Activated naive CD4-positive, alpha-beta T cell treated with anti-CD3 and anti-CD28 coated beads for 36 hours (primary cell): ENCODE measurements at regions of chr2 and their contacts with region 1.

Region 1: DNA sequence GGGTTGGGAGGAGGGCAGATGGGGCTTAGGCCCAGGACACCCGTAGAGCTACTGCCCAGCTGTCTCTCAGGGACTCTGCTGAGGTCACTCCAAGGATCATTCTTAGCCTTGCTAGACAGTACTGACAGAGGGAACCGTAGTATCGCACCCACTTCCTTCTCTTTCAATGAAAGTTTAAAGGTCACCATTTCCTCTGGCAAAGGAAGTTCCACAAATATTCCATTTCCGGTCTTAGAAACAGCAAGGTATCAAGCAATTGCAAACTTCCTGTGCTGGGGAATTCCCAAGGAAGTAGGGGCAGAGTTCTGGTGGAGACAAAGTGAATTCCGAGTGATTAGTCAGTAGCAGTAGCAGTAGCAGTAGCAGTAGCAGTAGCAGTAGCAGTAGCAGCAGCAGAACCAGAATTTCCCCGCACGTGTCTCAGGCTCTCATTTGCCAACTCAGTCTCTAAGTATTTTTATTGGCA is 24.7 kb downstream of the IL1B start:
- DNase-seq: peak; percentile 49
- H3K4me3 Mint-ChIP-seq: no peak overlapping the region
- H3K27ac Mint-ChIP-seq: peak overlapping the region; percentile 64
- H3K4me1 Mint-ChIP-seq: peaks cover 25% of the 10 kb centered on the region
- H3K27me3 Mint-ChIP-seq: no peaks in the 10 kb centered on the region

Region 2: DNA sequence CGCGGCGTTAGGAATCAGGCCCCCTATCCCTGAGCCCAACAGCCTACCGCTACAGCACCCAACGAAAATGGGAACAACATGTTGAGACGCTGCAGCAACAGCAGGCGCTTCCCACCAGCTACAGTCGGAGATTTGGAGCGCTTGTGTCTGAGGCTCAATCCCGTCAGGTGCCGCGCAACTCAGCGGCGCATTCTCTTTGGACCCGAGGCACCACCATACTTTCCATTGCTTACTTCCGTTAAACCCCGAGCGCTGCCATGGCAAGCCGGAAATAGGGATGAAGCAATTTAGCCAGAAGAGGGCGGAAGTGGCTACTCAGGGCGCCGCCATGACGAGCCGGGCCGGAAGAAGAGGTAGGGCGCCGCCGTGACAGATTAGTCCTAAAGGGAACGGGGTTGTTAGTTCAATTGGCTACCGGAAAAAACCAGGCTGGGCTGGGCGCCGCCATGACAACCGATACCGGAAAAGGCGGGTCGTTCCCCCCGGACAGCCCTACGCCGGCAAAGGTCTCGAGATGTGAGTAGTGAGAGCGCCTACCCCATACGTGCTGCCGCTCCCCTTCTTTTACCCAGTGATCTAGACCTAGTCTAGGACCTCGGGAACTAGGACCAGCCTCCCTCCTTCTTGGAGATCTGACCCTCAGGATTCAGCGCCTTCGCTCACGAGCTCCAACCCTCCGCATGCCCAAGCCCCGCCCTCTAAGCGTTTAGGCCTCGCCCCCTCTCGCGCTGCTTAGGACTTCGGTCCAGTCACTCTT is 227.6 kb before region 1 on chr2 and contains the start of gene CHCHD5:
- CTCF ChIA-PET with region 1: no interaction called
- intact Hi-C with region 1: no loop called
- DNase-seq: peak; percentile 96
- H3K4me3 Mint-ChIP-seq: peak within 1 kb of the TSS; percentile 98
- H3K27ac Mint-ChIP-seq: peak within 1 kb of the TSS; percentile 96
- H3K4me1 Mint-ChIP-seq: peaks cover 26% of the 10 kb centered on the region
- H3K27me3 Mint-ChIP-seq: no peaks in the 10 kb centered on the region
- total RNA-seq, gene CHCHD5: 40.3 to 43.5 TPM

Region 3: DNA sequence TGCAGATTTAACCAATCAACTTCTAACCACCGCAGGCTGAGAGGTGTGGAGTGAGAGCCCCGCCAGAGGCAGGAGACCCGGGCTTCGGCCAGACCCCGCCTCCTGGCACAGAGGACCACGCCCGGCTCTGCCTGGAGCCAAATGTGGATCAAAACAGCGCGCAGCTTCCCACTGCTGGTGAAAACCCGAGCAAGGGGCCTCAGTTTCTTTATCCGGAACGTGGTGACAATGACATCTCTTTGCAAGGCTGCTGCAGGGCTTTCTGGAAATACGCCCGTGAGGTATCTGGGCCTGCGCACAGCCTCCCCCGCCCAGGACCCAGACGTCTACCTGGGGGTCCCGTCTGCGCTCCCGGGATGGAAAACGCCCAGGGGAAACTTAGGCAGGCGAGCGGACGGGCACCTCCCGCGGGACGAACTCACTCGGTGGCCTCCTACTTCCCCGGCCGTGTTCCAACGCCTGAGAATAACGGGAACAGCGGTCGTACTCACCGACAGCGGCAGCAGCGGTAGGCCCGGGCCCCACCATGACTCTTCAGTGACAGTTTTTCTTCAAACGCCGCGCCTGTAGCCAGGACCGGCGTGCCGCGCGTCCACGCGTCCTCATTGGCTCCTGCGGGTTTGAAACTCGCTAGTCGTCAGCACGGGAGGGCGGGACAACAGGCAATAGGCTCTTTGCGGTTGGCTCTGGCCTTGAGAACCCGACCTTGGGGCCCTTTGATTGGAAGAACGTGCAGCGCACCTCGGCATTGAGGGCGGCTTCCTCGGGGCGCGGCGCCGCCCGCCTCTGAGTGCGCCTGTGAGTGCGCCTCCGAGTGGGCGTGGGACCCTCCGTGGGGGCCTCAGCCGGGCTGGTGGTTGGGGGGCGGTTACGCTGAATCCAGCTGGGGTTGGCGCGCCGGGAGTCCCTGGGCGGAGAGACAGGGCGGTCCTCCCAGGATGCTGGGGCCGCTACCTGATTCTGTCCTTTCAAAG is 47.5 kb before region 1 on chr2 and contains the start of gene CKAP2L:
- CTCF ChIA-PET with region 1: no interaction called
- intact Hi-C with region 1: loop called (anchors 5 kb)
- DNase-seq: peak; percentile 99
- H3K4me3 Mint-ChIP-seq: peak within 1 kb of the TSS; percentile 98
- H3K27ac Mint-ChIP-seq: peak within 1 kb of the TSS; percentile 93
- H3K4me1 Mint-ChIP-seq: peaks cover 18% of the 10 kb centered on the region
- H3K27me3 Mint-ChIP-seq: no peaks in the 10 kb centered on the region
- total RNA-seq, gene CKAP2L: 49.2 to 50.8 TPM